Pancreas (tissue), 10 donors: ENCODE measurements at regions of chr18 and their contacts with region 1.

Region 1: DNA sequence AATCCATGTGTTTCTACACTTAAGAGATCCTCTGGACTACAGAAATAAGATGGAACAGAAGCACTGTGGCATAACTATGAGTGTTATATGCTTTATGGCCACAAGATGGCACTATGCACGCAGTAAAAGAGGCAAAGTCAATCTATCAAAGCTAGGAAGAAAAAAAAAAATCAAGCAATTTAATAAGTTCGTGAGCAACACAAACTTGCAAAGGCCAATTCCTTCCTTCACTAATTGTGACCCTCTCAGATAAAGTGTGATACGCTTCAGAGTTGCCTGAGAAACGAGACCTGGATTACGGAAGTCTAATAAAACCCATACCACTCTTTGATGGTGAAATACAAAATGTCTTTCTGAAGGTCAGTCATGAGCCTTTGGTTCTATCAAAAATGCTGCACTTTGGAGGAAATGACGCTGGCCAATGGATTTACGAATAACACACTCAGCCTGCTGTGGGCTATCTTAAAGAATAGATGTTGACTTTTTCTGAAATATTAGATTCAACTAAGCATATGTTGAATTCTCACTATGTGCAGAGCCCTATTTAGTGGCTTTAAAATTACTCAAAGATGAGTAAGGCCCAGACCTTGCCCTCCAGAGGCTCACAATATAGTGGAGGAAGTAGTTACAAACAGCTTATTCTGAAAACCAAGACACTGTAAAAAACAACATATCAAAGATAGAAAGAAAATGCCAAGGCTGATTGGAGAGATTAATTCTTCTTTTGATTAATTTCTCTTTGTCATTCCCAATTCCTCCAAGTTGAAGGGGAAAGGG is 35.5 kb upstream of the TTR start:
- DNase-seq: peak in 3 of 6 donors; percentile 24 to 57 (median 29)
- ATAC-seq: peak; percentile 85 to 98 (median 94)
- H3K4me3 ChIP-seq: no peak overlapping the region
- H3K27ac ChIP-seq: no peak overlapping the region
- H3K4me1 ChIP-seq: no peaks in the 10 kb centered on the region
- H3K27me3 ChIP-seq: no peaks in the 10 kb centered on the region
- CTCF ChIP-seq: peak; percentile 71 to 79 (median 76)

Region 2: GRCh38 chr18:31710826-31711225 is 154.7 kb after region 1 on chr18:
- intact Hi-C with region 1: loop called in 1 of 3 experiments (anchors 10 kb)
- DNase-seq: no peak
- ATAC-seq: no peak
- H3K4me3 ChIP-seq: no peak overlapping the region
- H3K27ac ChIP-seq: no peak overlapping the region
- H3K4me1 ChIP-seq: no peaks in the 10 kb centered on the region
- H3K27me3 ChIP-seq: no peaks in the 10 kb centered on the region
- CTCF ChIP-seq: no peak

Region 3: GRCh38 chr18:31814132-31814531 is 258.0 kb after region 1 on chr18:
- intact Hi-C with region 1: loop called in 1 of 3 experiments (anchors 5 kb)
- DNase-seq: no peak
- ATAC-seq: no peak
- H3K4me3 ChIP-seq: no peak overlapping the region
- H3K27ac ChIP-seq: no peak overlapping the region
- H3K4me1 ChIP-seq: no peaks in the 10 kb centered on the region
- H3K27me3 ChIP-seq: no peaks in the 10 kb centered on the region
- CTCF ChIP-seq: no peak

Region 4: DNA sequence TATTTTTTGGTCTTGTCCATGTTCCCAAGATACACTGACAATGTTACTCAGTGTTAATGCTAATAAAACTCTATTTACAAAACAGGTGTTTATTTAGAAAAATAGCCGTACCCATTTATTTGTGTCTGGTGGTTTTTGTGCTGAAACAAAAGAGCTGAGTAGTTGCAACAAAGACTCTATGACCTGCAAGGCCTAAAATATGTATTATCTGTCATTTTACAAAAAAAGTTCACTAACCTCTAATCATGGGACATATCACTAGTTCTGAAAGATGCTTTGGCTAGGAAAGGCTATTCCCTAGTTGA is 263.7 kb after region 1 on chr18:
- intact Hi-C with region 1: loop called in 1 of 3 experiments (anchors 10 kb)
- DNase-seq: no peak
- ATAC-seq: no peak
- H3K4me3 ChIP-seq: no peak overlapping the region
- H3K27ac ChIP-seq: no peak overlapping the region
- H3K4me1 ChIP-seq: no peaks in the 10 kb centered on the region
- H3K27me3 ChIP-seq: no peaks in the 10 kb centered on the region
- CTCF ChIP-seq: no peak